ENCODE measurements at regions of chr5 and their contacts with region 1.

Region 1: GRCh38 chr5:71475788-71476384 is 20.4 kb downstream of the BDP1 start:
- DNase-seq: no peak
- H3K4me3 Mint-ChIP-seq: no peak overlapping the region
- H3K27ac Mint-ChIP-seq: no peak overlapping the region
- H3K4me1 Mint-ChIP-seq: no peaks in the 10 kb centered on the region
- H3K27me3 Mint-ChIP-seq: no peaks in the 10 kb centered on the region

Region 2: DNA sequence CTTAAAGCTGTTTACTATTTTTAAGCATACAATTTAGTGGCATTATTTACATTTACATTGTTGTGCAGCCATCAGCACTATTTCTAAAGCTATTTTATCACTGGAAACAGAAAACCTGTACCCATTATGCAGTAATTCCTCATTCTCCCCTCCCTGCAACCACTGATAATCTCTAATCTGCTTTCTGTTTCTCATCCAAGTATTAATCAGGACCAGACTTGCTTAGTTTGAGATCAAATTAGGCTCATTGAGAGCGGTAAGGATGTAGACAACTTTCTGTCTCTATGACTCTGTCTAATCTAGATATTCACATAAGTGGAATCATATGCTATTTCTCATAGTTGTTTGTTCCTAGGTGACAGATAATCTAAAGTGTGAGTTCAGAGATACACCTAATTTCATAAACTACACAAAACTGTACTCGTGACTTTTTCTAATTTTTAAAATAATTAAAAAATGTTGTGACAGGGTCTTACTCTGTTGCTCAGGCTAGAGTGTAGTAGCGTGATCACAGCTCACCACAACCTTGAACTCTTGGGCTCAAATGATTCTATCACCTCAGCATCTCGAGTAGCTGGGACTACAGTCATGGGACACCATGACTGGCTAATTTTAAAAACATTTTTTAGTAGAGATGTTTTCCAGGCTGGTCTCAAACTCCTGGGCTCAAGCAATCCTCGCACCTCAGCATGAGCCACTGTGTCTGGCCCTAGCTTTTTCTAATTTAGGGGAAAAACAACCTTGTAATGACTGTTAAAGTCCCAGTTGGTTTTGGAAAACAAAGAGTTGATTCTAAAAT is 17.1 kb after region 1 on chr5:
- CTCF ChIA-PET with region 1: interaction called, 17 read pairs
- POLR2A ChIA-PET with region 1: no interaction called
- intact Hi-C with region 1: no loop called
- DNase-seq: no peak
- H3K4me3 Mint-ChIP-seq: no peak overlapping the region
- H3K27ac Mint-ChIP-seq: no peak overlapping the region
- H3K4me1 Mint-ChIP-seq: peaks cover 2% of the 10 kb centered on the region
- H3K27me3 Mint-ChIP-seq: no peaks in the 10 kb centered on the region

Region 3: GRCh38 chr5:71757590-71758543 is 282.0 kb after region 1 on chr5:
- CTCF ChIA-PET with region 1: interaction called, 3 read pairs
- POLR2A ChIA-PET with region 1: no interaction called
- intact Hi-C with region 1: loop called (anchors 10 kb)
- DNase-seq: peak; percentile 71
- H3K4me3 Mint-ChIP-seq: no peak overlapping the region
- H3K27ac Mint-ChIP-seq: no peak overlapping the region
- H3K4me1 Mint-ChIP-seq: peaks cover 6% of the 10 kb centered on the region
- H3K27me3 Mint-ChIP-seq: no peaks in the 10 kb centered on the region

Measured in activated CD4-positive, alpha-beta memory T cell treated with anti-CD3 and anti-CD28 coated beads for 36 hours (primary cell).